ENCODE measurements at regions of chr12 and their contacts with region 1.

Region 1: DNA sequence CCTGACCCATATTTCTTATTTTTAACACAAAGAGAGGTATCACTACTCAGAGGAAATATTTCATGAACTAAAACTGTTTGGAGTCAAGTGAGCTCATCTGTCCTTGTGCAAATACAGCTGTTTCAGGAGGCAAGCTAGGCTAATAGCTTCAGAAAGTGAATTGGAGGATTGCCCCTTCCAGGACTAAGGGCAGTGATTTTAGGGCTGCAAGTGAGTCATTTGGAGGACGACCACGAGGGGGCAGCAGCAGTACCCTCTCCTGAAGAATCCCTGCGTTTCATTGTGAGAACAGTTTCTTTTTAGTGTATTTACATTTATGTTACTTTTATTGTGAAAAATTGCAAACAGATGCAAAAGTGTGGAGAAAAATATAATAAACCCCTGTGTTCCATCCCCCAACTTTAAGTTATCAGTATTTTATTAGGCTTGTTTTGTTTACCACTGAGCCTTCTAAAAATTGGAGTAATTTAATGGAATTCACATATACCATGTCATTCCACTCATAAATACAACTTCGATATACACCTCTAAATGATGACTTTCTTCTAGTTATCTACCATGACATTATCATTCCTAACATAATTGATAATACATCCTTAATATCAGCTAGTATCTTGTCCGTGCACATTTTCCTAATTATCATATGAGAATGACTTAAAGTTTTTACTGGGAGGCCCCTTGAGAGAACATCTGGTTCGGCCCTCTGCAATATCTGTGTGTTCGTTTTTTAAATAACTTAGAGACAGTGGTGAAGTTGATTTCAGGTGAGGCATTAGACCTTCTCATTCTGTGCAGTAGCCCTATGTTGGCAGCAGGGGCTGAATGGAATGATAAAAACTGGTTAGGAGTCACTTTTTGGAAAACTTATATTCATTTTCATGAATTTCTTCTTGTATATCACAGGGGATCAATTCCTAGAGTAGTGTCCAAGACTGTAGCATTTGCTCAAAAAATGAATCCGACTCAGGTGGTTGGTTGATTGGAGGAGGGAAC is 13.7 kb downstream of the FOXJ2 start:
- DNase-seq: peak; percentile 84
- CTCF ChIP-seq: peak; percentile 79

Region 2: DNA sequence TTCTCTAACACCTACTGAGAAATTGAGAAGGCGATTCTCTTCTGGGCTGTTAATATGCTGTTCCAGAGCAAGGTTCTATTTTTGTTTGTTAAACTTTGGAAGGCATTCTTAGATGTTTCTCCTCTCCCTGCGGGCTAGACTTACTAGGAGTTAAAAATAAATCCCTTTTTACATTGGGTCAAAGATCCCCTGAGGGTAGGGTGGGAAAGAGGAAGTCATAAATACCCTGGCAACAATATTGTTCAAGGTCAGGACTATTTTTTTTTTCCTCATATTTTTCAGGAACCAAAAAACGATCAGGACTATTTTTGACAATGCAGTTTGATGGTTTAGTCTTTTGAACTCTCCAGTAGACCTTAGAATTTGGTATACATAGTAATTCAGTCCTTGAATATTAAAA is 161.6 kb before region 1 on chr12:
- CTCF ChIA-PET with region 1: no interaction called
- POLR2A ChIA-PET with region 1: no interaction called
- DNase-seq: no peak
- CTCF ChIP-seq: no peak

Region 3: GRCh38 chr12:8026291-8026900 is 19.9 kb before region 1 on chr12:
- CTCF ChIA-PET with region 1: interaction called, 77 read pairs
- POLR2A ChIA-PET with region 1: no interaction called
- DNase-seq: peak; percentile 96
- CTCF ChIP-seq: no peak

Region 4: GRCh38 chr12:8032242-8033152 is 13.8 kb before region 1 on chr12 and contains the start of gene FOXJ2:
- CTCF ChIA-PET with region 1: interaction called, 77 read pairs
- POLR2A ChIA-PET with region 1: no interaction called
- DNase-seq: peak; percentile 85
- CTCF ChIP-seq: no peak

Region 5: GRCh38 chr12:8078398-8078797 is 32.1 kb after region 1 on chr12:
- CTCF ChIA-PET with region 1: interaction called, 34 read pairs
- POLR2A ChIA-PET with region 1: no interaction called
- DNase-seq: peak; percentile 32
- CTCF ChIP-seq: peak; percentile 26

Measured in GM10248 (cell line).